MCF 10A (cell line): ENCODE measurements at regions of chr7 and their contacts with region 1.

Region 1: DNA sequence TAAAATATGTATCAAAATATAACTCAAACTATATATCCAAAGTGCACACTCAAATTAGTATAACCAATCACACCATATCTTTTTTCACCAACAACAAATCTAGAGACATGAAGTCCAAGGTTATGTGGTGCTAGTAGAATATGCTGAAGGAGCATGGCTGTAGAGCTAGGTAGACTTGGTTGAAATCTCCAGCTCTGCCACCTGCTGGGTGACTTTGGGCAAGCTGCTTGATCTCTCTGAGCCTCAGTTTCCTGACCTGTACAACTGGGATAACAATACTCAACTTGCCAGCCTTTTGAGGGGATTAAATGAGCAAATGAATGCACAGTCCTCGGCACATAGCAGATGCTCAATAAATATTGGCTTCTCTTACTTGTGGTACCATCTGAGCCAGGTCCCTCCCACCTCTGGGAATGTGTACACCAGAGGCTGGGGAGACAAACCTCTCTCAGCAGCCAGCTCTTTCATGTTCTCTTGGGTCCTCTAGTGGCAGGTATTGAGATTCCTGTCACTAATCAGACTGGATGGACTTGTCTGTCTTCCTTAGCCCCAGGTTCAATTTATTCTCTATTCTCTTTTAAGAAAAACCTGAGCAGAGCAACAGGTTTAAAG is 94.2 kb upstream of the PDE1C start:
- DNase-seq: peak; percentile 84
- H3K4me3 Mint-ChIP-seq: no peak overlapping the region
- H3K27ac Mint-ChIP-seq: no peak overlapping the region
- H3K4me1 Mint-ChIP-seq: peaks cover 9% of the 10 kb centered on the region
- H3K27me3 Mint-ChIP-seq: no peaks in the 10 kb centered on the region
- CTCF ChIP-seq: peak; percentile 71

Region 2: DNA sequence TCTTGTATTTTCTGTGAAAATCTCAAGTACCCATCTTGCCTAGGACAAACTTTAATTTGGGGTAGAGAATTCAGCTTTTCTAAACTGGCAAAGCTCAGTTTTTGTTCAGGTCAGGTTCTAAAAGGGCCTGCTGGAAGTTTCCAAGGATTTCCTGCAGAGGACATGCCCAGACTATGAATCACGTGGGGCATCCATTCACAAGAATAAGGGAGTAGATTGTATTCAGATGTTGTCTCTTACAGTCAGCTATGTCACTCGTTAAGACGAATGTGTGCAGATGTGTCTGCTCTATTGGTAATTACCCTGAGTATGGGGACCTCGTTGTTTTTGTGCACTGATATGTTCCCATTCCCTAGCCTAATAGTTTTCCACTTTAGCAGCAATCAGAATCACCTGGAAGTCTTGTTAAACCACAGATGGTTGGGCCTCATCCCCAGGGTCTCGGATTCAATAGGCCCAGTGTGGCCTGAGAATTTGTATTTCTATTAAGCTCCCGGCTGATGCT is 731.6 kb before region 1 on chr7:
- CTCF ChIA-PET with region 1: no interaction called
- POLR2A ChIA-PET with region 1: no interaction called
- intact Hi-C with region 1: no loop called
- DNase-seq: no peak
- H3K4me3 Mint-ChIP-seq: no peak overlapping the region
- H3K27ac Mint-ChIP-seq: no peak overlapping the region
- H3K4me1 Mint-ChIP-seq: no peaks in the 10 kb centered on the region
- H3K27me3 Mint-ChIP-seq: peaks cover 16% of the 10 kb centered on the region
- CTCF ChIP-seq: no peak

Region 3: DNA sequence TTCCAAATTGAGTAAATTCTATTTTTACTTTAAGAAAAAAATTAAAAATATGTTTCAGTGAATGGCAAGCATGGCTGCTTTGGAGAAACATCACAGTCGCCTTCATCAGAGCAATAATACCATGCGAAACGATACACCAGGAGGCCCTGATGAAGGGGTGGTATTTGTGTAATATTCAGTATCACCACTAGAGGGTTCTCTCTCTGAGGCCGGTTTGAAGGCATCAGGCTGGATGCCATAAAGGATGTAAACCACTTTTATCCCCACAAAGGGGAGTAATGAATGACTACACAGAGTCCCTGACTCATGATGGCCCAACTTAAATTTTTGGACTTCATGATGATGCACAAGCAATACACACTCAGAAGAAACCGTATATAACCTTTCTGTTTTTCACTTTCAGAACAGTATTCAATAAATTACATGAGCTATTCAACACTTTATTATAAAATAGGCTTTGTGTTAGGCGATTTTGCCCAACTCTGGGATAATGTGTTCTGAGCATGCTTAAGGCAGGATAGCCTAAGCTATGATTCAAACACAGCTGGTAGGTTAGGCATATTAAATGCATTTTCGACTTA is 382.0 kb before region 1 on chr7:
- CTCF ChIA-PET with region 1: interaction called, 40 read pairs
- POLR2A ChIA-PET with region 1: no interaction called
- intact Hi-C with region 1: loop called (anchors 1 kb)
- DNase-seq: peak; percentile 66
- H3K4me3 Mint-ChIP-seq: no peak overlapping the region
- H3K27ac Mint-ChIP-seq: no peak overlapping the region
- H3K4me1 Mint-ChIP-seq: no peaks in the 10 kb centered on the region
- H3K27me3 Mint-ChIP-seq: no peaks in the 10 kb centered on the region
- CTCF ChIP-seq: peak; percentile 81

Region 4: DNA sequence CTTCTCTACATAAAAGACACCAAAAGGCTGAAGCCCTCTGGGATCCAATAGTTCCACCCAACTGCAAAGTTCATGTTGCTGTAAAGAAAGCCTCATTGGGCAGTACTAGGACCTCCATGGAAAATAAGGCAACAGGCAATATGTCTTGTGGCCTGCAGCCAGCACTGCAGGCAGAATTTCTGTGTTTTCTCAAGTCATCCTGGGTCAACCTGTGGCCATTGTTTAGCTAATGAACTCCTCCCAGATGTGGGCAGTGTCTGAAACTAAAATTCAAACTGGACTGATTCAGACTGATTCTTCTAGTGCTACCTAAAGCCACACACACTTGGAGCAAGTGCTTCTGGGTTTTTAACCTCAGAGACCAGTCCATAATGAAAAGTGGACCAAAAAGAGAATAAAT is 335.9 kb before region 1 on chr7:
- CTCF ChIA-PET with region 1: interaction called, 3 read pairs
- POLR2A ChIA-PET with region 1: no interaction called
- intact Hi-C with region 1: loop called (anchors 1 kb)
- DNase-seq: no peak
- H3K4me3 Mint-ChIP-seq: no peak overlapping the region
- H3K27ac Mint-ChIP-seq: no peak overlapping the region
- H3K4me1 Mint-ChIP-seq: no peaks in the 10 kb centered on the region
- H3K27me3 Mint-ChIP-seq: no peaks in the 10 kb centered on the region
- CTCF ChIP-seq: no peak

Region 5: GRCh38 chr7:32043714-32044113 is 120.7 kb before region 1 on chr7:
- CTCF ChIA-PET with region 1: interaction called, 3 read pairs
- POLR2A ChIA-PET with region 1: no interaction called
- intact Hi-C with region 1: loop called (anchors 5 kb)
- DNase-seq: peak; percentile 57
- H3K4me3 Mint-ChIP-seq: no peak overlapping the region
- H3K27ac Mint-ChIP-seq: no peak overlapping the region
- H3K4me1 Mint-ChIP-seq: no peaks in the 10 kb centered on the region
- H3K27me3 Mint-ChIP-seq: no peaks in the 10 kb centered on the region
- CTCF ChIP-seq: no peak

Region 6: DNA sequence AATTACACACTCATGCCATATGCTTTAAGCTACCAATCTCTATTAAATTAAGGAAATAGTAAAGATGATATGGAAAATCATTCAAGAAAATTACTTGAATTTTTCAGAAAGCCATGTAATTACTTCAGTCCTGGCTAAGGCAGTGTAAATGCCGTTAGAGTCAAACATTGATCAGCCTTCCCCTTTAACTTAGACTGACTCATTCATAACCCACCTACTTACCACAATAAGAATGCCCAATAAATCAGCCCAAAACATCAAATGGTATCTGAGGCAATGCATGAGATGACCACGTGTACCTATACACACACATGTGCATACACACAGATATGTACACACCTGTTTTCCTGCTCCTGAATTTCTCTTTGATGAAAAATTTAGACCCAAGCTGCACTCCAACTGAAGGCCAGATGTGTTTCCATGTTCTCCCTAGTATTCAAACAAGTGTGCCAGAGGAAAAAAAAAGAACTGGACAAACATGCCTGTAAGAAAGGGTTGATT is 64.0 kb before region 1 on chr7:
- CTCF ChIA-PET with region 1: no interaction called
- POLR2A ChIA-PET with region 1: no interaction called
- intact Hi-C with region 1: no loop called
- DNase-seq: no peak
- H3K4me3 Mint-ChIP-seq: no peak overlapping the region
- H3K27ac Mint-ChIP-seq: no peak overlapping the region
- H3K4me1 Mint-ChIP-seq: peaks cover 13% of the 10 kb centered on the region
- H3K27me3 Mint-ChIP-seq: no peaks in the 10 kb centered on the region
- CTCF ChIP-seq: no peak

Region 7: DNA sequence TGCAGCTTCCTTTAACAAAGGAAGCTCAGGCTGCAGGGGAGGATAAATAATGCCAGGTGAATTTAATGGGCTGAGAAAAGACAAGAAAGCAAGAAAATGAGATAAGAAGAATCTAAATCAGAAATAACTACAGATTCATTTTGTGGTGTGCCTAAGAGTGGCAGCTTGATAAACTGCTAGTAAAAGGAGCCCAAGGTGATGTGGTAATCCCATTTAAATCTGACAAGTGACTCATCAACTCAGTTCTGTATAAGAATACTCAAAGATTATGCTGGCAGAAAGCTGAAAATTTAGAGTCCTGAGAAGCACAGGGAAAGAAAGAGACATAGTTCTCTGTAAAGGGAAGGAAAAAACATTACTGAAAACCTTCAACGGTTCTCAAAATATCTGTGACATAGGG is 15.1 kb after region 1 on chr7:
- CTCF ChIA-PET with region 1: interaction called, 16 read pairs
- POLR2A ChIA-PET with region 1: no interaction called
- intact Hi-C with region 1: no loop called
- DNase-seq: peak; percentile 45
- H3K4me3 Mint-ChIP-seq: no peak overlapping the region
- H3K27ac Mint-ChIP-seq: no peak overlapping the region
- H3K4me1 Mint-ChIP-seq: peaks cover 6% of the 10 kb centered on the region
- H3K27me3 Mint-ChIP-seq: peaks cover 10% of the 10 kb centered on the region
- CTCF ChIP-seq: no peak

Region 8: DNA sequence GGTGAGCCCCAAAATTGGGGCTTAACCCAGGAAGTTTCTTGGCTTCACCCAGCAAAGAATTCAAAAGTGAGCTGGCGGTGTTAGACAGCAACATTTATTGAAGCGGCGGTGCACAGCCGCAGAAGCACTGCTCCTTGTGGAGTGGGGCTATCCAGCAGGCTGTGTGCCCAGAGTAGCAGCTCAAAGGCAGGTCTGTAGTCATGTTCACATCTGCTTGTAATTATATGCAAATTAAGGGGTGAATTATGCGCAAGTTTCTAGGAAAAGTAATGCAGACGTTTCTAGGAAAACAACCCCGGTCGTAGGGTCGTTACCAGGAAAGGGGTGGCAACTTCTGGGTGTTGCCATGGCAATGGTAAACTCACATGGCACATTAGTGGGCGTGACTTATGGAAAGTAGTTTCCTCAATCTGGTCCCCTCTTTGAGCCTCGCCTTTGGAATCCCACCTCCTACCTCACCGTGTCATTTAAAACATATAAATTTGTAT is 740.8 kb after region 1 on chr7:
- CTCF ChIA-PET with region 1: no interaction called
- POLR2A ChIA-PET with region 1: no interaction called
- intact Hi-C with region 1: no loop called
- DNase-seq: peak; percentile 26
- H3K4me3 Mint-ChIP-seq: peak overlapping the region; percentile 64
- H3K27ac Mint-ChIP-seq: no peak overlapping the region
- H3K4me1 Mint-ChIP-seq: no peaks in the 10 kb centered on the region
- H3K27me3 Mint-ChIP-seq: no peaks in the 10 kb centered on the region
- CTCF ChIP-seq: no peak